ENCODE measurements at regions of chr15 and their contacts with region 1.

Region 1: GRCh38 chr15:34331809-34332208 is 5.8 kb downstream of the SLC12A6 start:
- DNase-seq: no peak
- H3K4me3 Mint-ChIP-seq: peak overlapping the region; percentile 2
- H3K27ac Mint-ChIP-seq: peak overlapping the region; percentile 72
- H3K4me1 Mint-ChIP-seq: peaks cover 82% of the 10 kb centered on the region
- H3K27me3 Mint-ChIP-seq: no peaks in the 10 kb centered on the region

Region 2: GRCh38 chr15:34297059-34297458 is 34.8 kb before region 1 on chr15:
- CTCF ChIA-PET with region 1: no interaction called
- POLR2A ChIA-PET with region 1: no interaction called
- DNase-seq: no peak
- H3K4me3 Mint-ChIP-seq: no peak overlapping the region
- H3K27ac Mint-ChIP-seq: no peak overlapping the region
- H3K4me1 Mint-ChIP-seq: peaks cover 2% of the 10 kb centered on the region
- H3K27me3 Mint-ChIP-seq: no peaks in the 10 kb centered on the region

Region 3: GRCh38 chr15:34342737-34343575 is 11.1 kb after region 1 on chr15 and contains the starts of genes NOP10 and NUTM1:
- CTCF ChIA-PET with region 1: interaction called, 13 read pairs
- POLR2A ChIA-PET with region 1: no interaction called
- DNase-seq: peak; percentile 96
- H3K4me3 Mint-ChIP-seq: no peak within 1 kb of the TSS
- H3K27ac Mint-ChIP-seq: no peak within 1 kb of the TSS
- H3K4me1 Mint-ChIP-seq: peaks cover 23% of the 10 kb centered on the region
- H3K27me3 Mint-ChIP-seq: no peaks in the 10 kb centered on the region
- total RNA-seq, gene NOP10: 162 to 207 TPM
- total RNA-seq, gene NUTM1: not detected

Measured in activated CD4-positive, alpha-beta T cell treated with anti-CD3 and anti-CD28 coated beads, Interleukin-2, amount 10 ng/mL, durations not matched to agents 7 days and 5 days (primary cell).